HepG2 (cell line): ENCODE measurements at regions of chr2 and their contacts with region 1.

Region 1: DNA sequence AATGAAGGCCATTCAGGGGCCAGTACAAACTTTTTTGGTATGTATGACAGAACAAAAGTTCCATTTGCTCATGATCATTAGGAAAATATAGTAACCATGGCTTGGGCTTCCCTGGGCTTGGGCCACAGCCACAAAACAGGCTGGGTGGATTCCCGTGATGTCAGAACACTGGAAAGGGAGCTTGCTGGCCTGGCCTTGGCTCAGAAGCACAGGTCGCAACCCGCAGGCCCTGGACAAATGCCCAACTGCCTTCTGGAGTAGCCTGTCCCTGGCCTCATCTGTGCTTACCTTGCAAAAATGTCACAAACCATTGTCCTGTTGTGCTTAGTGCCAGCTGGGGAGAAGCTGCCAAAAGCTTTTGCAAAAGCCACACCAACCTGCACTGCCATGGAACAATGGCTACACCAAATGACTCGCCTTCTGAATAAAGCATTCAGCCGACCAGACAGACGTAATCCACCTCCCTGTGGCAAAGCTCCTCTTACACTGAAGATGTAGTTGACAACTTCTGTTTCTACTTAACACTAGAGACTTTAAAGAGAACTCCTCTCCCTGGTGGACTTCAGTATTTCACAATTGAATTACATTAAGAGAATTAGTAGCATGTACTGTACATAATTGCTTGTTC is 125.5 kb downstream of the ANKRD44 start:
- DNase-seq: no peak
- ATAC-seq: no peak
- H3K4me3 ChIP-seq: no peak overlapping the region
- H3K27ac ChIP-seq: no peak overlapping the region
- H3K4me1 ChIP-seq: no peaks in the 10 kb centered on the region
- H3K27me3 ChIP-seq: no peaks in the 10 kb centered on the region
- CTCF ChIP-seq: no peak
- EP300 ChIP-seq: no peak
- POLR2A ChIP-seq: no peak
- RAD21 ChIP-seq: no peak

Region 2: GRCh38 chr2:196823750-196824522 is 361.1 kb before region 1 on chr2:
- CTCF ChIA-PET with region 1: no interaction called
- POLR2A ChIA-PET with region 1: no interaction called
- in situ Hi-C with region 1: no loop called
- intact Hi-C with region 1: no loop called
- DNase-seq: no peak
- ATAC-seq: no peak
- H3K4me3 ChIP-seq: no peak overlapping the region
- H3K27ac ChIP-seq: no peak overlapping the region
- H3K4me1 ChIP-seq: peaks cover 13% of the 10 kb centered on the region
- H3K27me3 ChIP-seq: 0 out of 5 replicates have a peak, but pooled peaks cover 0 to 3% of the 10 kb centered on the region in 2 experiments
- CTCF ChIP-seq: no peak
- EP300 ChIP-seq: no peak
- POLR2A ChIP-seq: no peak
- RAD21 ChIP-seq: no peak

Region 3: DNA sequence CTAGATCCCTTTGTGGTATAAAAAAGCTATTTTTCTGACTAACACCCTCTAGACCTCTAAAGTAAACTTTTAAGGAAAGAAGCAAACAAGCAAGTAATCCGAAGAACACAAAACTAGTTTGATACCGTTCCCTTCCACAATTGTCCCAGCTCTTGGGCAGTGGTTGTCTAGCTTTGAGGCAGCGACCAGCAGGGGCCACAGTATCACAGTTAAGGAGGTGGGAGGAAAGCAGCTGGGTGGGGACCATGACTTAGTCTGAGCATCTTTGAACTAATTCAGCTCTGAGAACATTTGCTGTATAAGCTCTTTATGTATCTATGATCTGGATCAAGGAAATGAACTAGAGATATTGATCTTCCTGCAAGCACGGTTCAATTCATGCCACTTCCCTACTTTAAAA is 198.8 kb after region 1 on chr2:
- CTCF ChIA-PET with region 1: interaction called, 46 read pairs
- POLR2A ChIA-PET with region 1: no interaction called
- in situ Hi-C with region 1: loop called (anchors 5 kb)
- intact Hi-C with region 1: no loop called
- DNase-seq: no peak
- ATAC-seq: peak; percentile 57
- H3K4me3 ChIP-seq: no peak overlapping the region
- H3K27ac ChIP-seq: no peak overlapping the region
- H3K4me1 ChIP-seq: 0 out of 2 replicates have a peak, but pooled peaks cover 2% of the 10 kb centered on the region
- H3K27me3 ChIP-seq: peaks cover 0 to 11% of the 10 kb centered on the region in 2 experiments; a peak in 1 of 5 replicates
- CTCF ChIP-seq: peak; percentile 60
- EP300 ChIP-seq: no peak
- POLR2A ChIP-seq: no peak
- RAD21 ChIP-seq: no peak